ENCODE measurements at regions of chr16 and their contacts with region 1.

Region 1: DNA sequence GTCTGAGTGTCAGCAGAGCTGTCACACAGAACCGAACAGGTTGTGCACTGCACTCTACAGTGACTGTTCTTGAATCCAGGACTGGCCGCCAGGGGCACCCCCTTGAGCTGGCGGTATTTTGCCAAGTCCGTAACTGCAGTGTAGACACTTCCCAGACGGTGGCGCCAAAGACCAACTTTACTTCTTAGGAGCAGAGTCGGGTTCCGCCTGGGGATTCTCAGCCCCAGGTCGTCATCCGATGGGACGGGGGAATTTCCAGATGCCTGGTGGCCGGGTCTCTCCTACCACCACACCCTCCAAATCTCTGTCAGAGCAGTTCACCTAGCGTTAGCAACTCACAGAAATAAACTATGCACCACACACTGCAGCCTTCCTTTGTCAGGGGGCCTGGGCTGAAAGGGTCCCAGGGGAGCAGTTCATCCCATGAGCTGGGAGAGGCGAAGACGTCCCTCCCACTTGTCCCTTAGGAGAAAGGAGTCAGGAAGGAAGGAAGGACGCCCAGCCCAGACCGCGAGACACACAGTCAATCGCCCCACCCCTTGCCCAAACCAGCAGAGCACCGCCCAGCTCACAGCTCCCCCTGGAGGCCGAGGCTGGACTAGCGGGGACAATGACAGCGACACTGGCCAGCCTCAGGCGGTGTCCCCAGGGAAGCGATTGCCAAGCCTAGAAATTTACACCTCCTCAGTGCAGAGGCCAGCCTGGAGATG is 7.4 kb upstream of the RIPOR1 start:
- DNase-seq: peak; percentile 95
- ATAC-seq: peak; percentile 70
- H3K4me3 Mint-ChIP-seq: peak overlapping the region; percentile 89
- H3K27ac Mint-ChIP-seq: peak overlapping the region; percentile 98
- H3K4me1 Mint-ChIP-seq: peaks cover 75% of the 10 kb centered on the region
- H3K27me3 Mint-ChIP-seq: no peaks in the 10 kb centered on the region
- CTCF ChIP-seq: peak; percentile 85

Region 2: DNA sequence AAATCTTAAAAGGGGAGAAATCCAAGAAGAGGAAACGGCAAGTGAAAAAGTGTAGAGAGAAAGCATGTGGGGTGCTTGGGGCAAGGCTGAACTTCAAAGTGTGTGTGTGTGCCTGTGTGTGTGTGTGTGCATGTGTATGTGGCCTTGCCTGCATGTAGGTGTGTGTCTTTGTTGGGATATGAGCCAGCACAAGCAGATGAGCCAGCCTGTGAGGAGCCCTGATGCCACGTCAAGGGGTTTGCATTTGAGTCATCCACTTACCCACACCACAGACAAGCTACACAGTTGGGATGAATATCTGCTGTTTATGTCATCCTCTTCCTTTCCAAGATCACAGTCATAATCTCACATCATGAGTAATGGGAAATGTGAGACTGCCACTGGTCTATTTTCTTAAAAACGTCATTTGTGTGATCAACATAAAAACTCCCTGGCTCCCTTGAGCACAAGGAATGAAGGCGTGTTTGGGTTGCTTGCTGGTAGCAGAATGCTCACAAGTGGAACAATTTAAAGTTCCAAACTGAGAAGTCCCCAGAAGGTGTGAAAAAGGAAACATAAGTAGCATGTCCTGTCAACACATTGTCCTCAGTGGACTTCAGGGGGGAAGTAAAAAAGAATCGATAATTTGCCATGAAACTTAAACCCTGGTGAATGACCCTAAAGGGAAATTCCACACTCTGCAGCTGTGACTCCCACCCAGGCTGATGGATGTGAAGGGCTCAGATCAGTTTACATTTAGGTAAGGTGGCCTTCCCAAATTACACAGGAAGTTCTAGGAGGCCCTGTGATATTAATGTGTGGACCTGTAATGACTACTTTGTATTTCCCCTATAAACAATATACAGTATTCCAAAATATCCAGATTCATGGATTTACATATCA is 209.4 kb before region 1 on chr16:
- CTCF ChIA-PET with region 1: no interaction called
- POLR2A ChIA-PET with region 1: interaction called, 11 read pairs
- intact Hi-C with region 1: no loop called
- DNase-seq: no peak
- ATAC-seq: no peak
- H3K4me3 Mint-ChIP-seq: no peak overlapping the region
- H3K27ac Mint-ChIP-seq: no peak overlapping the region
- H3K4me1 Mint-ChIP-seq: peaks cover 5% of the 10 kb centered on the region
- H3K27me3 Mint-ChIP-seq: peaks cover 3% of the 10 kb centered on the region
- CTCF ChIP-seq: no peak

Region 3: GRCh38 chr16:67480833-67481560 is 40.3 kb before region 1 on chr16 and contains the start of gene ATP6V0D1:
- CTCF ChIA-PET with region 1: interaction called, 33 read pairs
- POLR2A ChIA-PET with region 1: interaction called, 73 read pairs
- intact Hi-C with region 1: loop called (anchors 1 kb)
- DNase-seq: peak; percentile 99
- ATAC-seq: peak; percentile 82
- H3K4me3 Mint-ChIP-seq: peak within 1 kb of the TSS; percentile 99
- H3K27ac Mint-ChIP-seq: peak within 1 kb of the TSS; percentile 99
- H3K4me1 Mint-ChIP-seq: peaks cover 69% of the 10 kb centered on the region
- H3K27me3 Mint-ChIP-seq: no peaks in the 10 kb centered on the region
- CTCF ChIP-seq: no peak
- total RNA-seq, gene ATP6V0D1: 70.2 and 74.5 TPM in 2 replicates

Region 4: GRCh38 chr16:67504041-67505021 is 16.9 kb before region 1 on chr16:
- CTCF ChIA-PET with region 1: interaction called, 298 read pairs
- POLR2A ChIA-PET with region 1: interaction called, 7 read pairs
- intact Hi-C with region 1: loop called (anchors 1 kb)
- DNase-seq: no peak
- ATAC-seq: peak; percentile 81
- H3K4me3 Mint-ChIP-seq: peak overlapping the region; percentile 48
- H3K27ac Mint-ChIP-seq: peak overlapping the region; percentile 88
- H3K4me1 Mint-ChIP-seq: peaks cover 45% of the 10 kb centered on the region
- H3K27me3 Mint-ChIP-seq: no peaks in the 10 kb centered on the region
- CTCF ChIP-seq: no peak

Region 5: GRCh38 chr16:67546761-67547422 is 25.6 kb after region 1 on chr16:
- CTCF ChIA-PET with region 1: interaction called, 46 read pairs
- POLR2A ChIA-PET with region 1: interaction called, 27 read pairs
- intact Hi-C with region 1: loop called (anchors 1 kb)
- DNase-seq: peak; percentile 73
- ATAC-seq: no peak
- H3K4me3 Mint-ChIP-seq: peak overlapping the region; percentile 58
- H3K27ac Mint-ChIP-seq: peak overlapping the region; percentile 95
- H3K4me1 Mint-ChIP-seq: peaks cover 87% of the 10 kb centered on the region
- H3K27me3 Mint-ChIP-seq: no peaks in the 10 kb centered on the region
- CTCF ChIP-seq: peak; percentile 95

Region 6: GRCh38 chr16:67660564-67661028 is 139.3 kb after region 1 on chr16 and contains the start of gene PARD6A:
- CTCF ChIA-PET with region 1: interaction called, 44 read pairs
- POLR2A ChIA-PET with region 1: interaction called, 16 read pairs
- intact Hi-C with region 1: loop called (anchors 1 kb)
- DNase-seq: peak; percentile 87
- ATAC-seq: peak; percentile 80
- H3K4me3 Mint-ChIP-seq: peak within 1 kb of the TSS; percentile 94
- H3K27ac Mint-ChIP-seq: peak within 1 kb of the TSS; percentile 94
- H3K4me1 Mint-ChIP-seq: peaks cover 28% of the 10 kb centered on the region
- H3K27me3 Mint-ChIP-seq: no peaks in the 10 kb centered on the region
- CTCF ChIP-seq: no peak
- total RNA-seq, gene PARD6A: 5.9 and 6.0 TPM in 2 replicates

Region 7: GRCh38 chr16:67781565-67781921 is 260.3 kb after region 1 on chr16:
- CTCF ChIA-PET with region 1: no interaction called
- POLR2A ChIA-PET with region 1: no interaction called
- intact Hi-C with region 1: no loop called
- DNase-seq: no peak
- ATAC-seq: no peak
- H3K4me3 Mint-ChIP-seq: no peak overlapping the region
- H3K27ac Mint-ChIP-seq: peak overlapping the region; percentile 60
- H3K4me1 Mint-ChIP-seq: peaks cover 27% of the 10 kb centered on the region
- H3K27me3 Mint-ChIP-seq: no peaks in the 10 kb centered on the region
- CTCF ChIP-seq: no peak

Region 8: DNA sequence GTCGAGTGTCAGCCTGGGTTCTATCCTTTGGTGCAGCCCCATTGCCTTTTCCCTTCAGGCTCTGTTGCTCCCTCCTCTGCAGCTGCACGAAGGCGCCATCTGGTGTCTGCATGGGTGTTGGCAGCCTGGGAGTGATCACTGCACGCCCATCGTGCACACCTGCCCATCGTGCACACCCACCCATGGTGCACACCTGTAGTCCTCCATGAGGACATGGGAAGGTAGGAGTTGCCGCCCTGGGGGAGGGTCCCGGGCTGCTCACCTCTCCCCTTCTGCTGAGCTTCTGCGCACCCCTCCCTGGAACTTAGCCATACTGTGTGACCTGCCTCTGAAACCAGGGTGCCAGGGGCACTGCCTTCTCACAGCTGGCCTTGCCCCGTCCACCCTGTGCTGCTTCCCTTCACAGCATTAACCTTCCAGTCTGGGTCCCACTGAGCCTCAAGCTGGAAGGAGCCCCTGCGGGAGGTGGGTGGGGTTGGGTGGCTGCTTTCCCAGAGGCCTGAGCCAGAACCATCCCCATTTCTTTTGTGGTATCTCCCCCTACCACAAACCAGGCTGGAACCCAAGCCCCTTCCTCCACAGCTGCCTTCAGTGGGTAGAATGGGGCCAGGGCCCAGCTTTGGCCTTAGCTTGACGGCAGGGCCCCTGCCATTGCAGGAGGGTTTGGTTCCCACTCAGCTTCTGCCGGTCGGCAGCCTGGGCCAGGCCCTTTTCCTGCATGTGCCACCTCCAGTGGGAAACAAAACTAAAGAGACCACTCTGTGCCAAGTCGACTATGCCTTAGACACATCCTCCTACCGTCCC is 407.5 kb after region 1 on chr16:
- CTCF ChIA-PET with region 1: interaction called, 5 read pairs
- POLR2A ChIA-PET with region 1: interaction called, 3 read pairs
- intact Hi-C with region 1: loop called (anchors 2 kb)
- DNase-seq: peak; percentile 64
- ATAC-seq: peak; percentile 90
- H3K4me3 Mint-ChIP-seq: no peak overlapping the region
- H3K27ac Mint-ChIP-seq: no peak overlapping the region
- H3K4me1 Mint-ChIP-seq: peaks cover 36% of the 10 kb centered on the region
- H3K27me3 Mint-ChIP-seq: no peaks in the 10 kb centered on the region
- CTCF ChIP-seq: peak; percentile 43